ENCODE measurements at regions of chr6 and their contacts with region 1.

Region 1: DNA sequence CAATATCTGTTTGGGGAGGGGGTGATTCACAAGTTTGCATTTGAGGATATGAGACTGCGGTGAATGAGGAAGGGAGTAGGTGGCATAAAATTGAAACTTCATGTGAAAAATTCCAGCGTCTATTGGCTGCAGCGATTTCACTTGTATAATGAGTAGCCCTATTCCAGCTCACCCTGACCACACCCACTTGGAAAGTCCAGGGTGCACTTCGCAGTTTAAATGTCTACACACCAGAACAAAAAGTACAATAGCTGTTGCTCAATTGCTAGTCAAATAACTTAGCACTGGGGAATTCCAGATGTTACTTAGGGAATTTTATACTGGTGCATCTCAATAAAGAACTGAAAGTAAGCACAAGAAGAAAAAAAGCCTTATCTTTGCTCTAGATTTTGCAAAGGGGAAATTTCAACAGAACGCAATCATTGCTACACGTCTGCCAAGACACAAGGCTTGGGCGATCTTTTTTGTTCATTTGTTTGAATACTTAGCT is 6.3 kb downstream of the TNFAIP3 start:
- DNase-seq: peak in 5 of 9 experiments; percentile 39 to 90 (median 54)
- ATAC-seq: peak; percentile 7
- H3K4me3 ChIP-seq: no peak overlapping the region
- H3K4me3 Mint-ChIP-seq: peak overlapping the region; percentile 98
- H3K27ac ChIP-seq: peak overlapping the region in 1 of 2 experiments; percentile 24
- H3K27ac Mint-ChIP-seq: peak overlapping the region; percentile 29
- H3K4me1 ChIP-seq: peaks cover 53% of the 10 kb centered on the region
- H3K4me1 Mint-ChIP-seq: peaks cover 71% of the 10 kb centered on the region
- H3K27me3 ChIP-seq: no peaks in the 10 kb centered on the region
- H3K27me3 Mint-ChIP-seq: no peaks in the 10 kb centered on the region
- CTCF ChIP-seq: no peak

Region 2: GRCh38 chr6:137717074-137718073 is 155.9 kb before region 1 on chr6:
- CTCF ChIA-PET with region 1: interaction called, 13 read pairs
- POLR2A ChIA-PET with region 1: interaction called, 19 read pairs
- intact Hi-C with region 1: no loop called
- DNase-seq: peak; percentile 57 to 95 (median 79)
- ATAC-seq: peak; percentile 50
- H3K4me3 ChIP-seq: no peak overlapping the region
- H3K4me3 Mint-ChIP-seq: peak overlapping the region; percentile 46
- H3K27ac ChIP-seq: peak overlapping the region; percentile 5 to 16
- H3K27ac Mint-ChIP-seq: peak overlapping the region; percentile 95
- H3K4me1 ChIP-seq: peaks cover 28% of the 10 kb centered on the region
- H3K4me1 Mint-ChIP-seq: peaks cover 47% of the 10 kb centered on the region
- H3K27me3 ChIP-seq: no peaks in the 10 kb centered on the region
- H3K27me3 Mint-ChIP-seq: no peaks in the 10 kb centered on the region
- CTCF ChIP-seq: no peak

Region 3: GRCh38 chr6:137938770-137939379 is 65.6 kb after region 1 on chr6:
- CTCF ChIA-PET with region 1: interaction called, 72 read pairs
- POLR2A ChIA-PET with region 1: interaction called, 18 read pairs
- intact Hi-C with region 1: loop called in 1 of 2 experiments (anchors 5 kb)
- DNase-seq: no peak
- ATAC-seq: no peak
- H3K4me3 ChIP-seq: no peak overlapping the region
- H3K4me3 Mint-ChIP-seq: no peak overlapping the region
- H3K27ac ChIP-seq: no peak overlapping the region
- H3K27ac Mint-ChIP-seq: no peak overlapping the region
- H3K4me1 ChIP-seq: peaks cover 7% of the 10 kb centered on the region
- H3K4me1 Mint-ChIP-seq: peaks cover 9% of the 10 kb centered on the region
- H3K27me3 ChIP-seq: no peaks in the 10 kb centered on the region
- H3K27me3 Mint-ChIP-seq: no peaks in the 10 kb centered on the region
- CTCF ChIP-seq: no peak

Region 4: DNA sequence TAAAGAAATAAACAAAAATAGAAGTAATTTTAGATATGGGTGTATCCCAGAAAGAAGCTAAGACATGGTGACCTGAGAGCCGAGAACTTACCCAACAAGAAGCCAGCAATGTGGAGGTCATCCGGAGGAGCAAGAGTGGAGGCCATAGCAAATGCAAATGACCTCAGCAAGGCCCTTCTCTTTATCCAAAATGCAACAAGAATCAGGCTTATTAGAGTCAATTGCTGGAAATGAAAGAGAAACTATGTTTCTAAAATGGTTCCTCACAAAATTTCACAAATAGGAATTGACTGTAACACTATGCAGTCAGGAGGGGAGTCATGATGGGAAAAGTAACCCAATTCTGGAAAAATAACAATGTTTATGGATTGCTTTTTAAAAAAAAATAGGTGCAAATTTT is 84.2 kb after region 1 on chr6:
- CTCF ChIA-PET with region 1: no interaction called
- POLR2A ChIA-PET with region 1: no interaction called
- intact Hi-C with region 1: no loop called
- DNase-seq: no peak
- ATAC-seq: no peak
- H3K4me3 ChIP-seq: no peak overlapping the region
- H3K4me3 Mint-ChIP-seq: no peak overlapping the region
- H3K27ac ChIP-seq: no peak overlapping the region
- H3K27ac Mint-ChIP-seq: no peak overlapping the region
- H3K4me1 ChIP-seq: no peaks in the 10 kb centered on the region
- H3K4me1 Mint-ChIP-seq: no peaks in the 10 kb centered on the region
- H3K27me3 ChIP-seq: no peaks in the 10 kb centered on the region
- H3K27me3 Mint-ChIP-seq: no peaks in the 10 kb centered on the region
- CTCF ChIP-seq: no peak

Region 5: GRCh38 chr6:137975188-137975940 is 102.0 kb after region 1 on chr6:
- CTCF ChIA-PET with region 1: interaction called, 17 read pairs
- POLR2A ChIA-PET with region 1: interaction called, 12 read pairs
- intact Hi-C with region 1: loop called in 1 of 2 experiments (anchors 1 kb)
- DNase-seq: peak in 5 of 9 experiments; percentile 19 to 89 (median 38)
- ATAC-seq: peak; percentile 80
- H3K4me3 ChIP-seq: peak overlapping the region; percentile 18 to 21
- H3K4me3 Mint-ChIP-seq: peak overlapping the region; percentile 74
- H3K27ac ChIP-seq: peak overlapping the region; percentile 39 to 85
- H3K27ac Mint-ChIP-seq: peak overlapping the region; percentile 92
- H3K4me1 ChIP-seq: peaks cover 24% of the 10 kb centered on the region
- H3K4me1 Mint-ChIP-seq: peaks cover 40% of the 10 kb centered on the region
- H3K27me3 ChIP-seq: no peaks in the 10 kb centered on the region
- H3K27me3 Mint-ChIP-seq: no peaks in the 10 kb centered on the region
- CTCF ChIP-seq: peak; percentile 75

Measured in CD8-positive, alpha-beta T cell (primary cell).